ENCODE measurements at regions of chr14 and their contacts with region 1.

Region 1: GRCh38 chr14:55094321-55095157 is 34.5 kb upstream of the LGALS3 start:
- DNase-seq: no peak
- H3K4me3 ChIP-seq: no peak overlapping the region
- H3K27ac ChIP-seq: no peak overlapping the region
- H3K4me1 ChIP-seq: peaks cover 33% of the 10 kb centered on the region
- H3K27me3 ChIP-seq: no peaks in the 10 kb centered on the region
- CTCF ChIP-seq: no peak

Region 2: DNA sequence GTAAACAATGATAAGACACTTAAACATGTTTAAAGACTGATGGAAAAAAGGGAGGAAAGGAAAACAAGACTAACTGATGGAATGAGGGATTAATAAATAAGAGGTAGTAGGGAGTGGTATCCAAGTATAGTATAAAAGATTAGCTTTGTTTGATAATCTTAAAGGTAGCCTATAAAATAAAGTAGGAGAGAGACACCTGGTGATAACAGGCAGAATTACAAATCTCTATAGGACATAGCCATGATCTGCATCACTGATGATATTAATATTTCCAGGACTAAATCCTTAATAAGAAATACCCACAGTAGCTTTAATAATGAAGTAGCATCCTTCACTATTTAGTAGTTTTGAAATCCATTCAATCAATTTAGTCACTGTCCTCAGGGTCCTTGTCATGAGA is 66.5 kb after region 1 on chr14:
- intact Hi-C with region 1: loop called (anchors 1 kb)
- DNase-seq: no peak
- H3K4me3 ChIP-seq: no peak overlapping the region
- H3K27ac ChIP-seq: no peak overlapping the region
- H3K4me1 ChIP-seq: no peaks in the 10 kb centered on the region
- H3K27me3 ChIP-seq: no peaks in the 10 kb centered on the region
- CTCF ChIP-seq: peak; percentile 76

Region 3: GRCh38 chr14:55579724-55580469 is 485.4 kb after region 1 on chr14 and contains the start of gene KTN1:
- intact Hi-C with region 1: no loop called
- DNase-seq: peak; percentile 87
- H3K4me3 ChIP-seq: peak within 1 kb of the TSS; percentile 88
- H3K27ac ChIP-seq: peak within 1 kb of the TSS; percentile 97
- H3K4me1 ChIP-seq: peaks cover 62% of the 10 kb centered on the region
- H3K27me3 ChIP-seq: no peaks in the 10 kb centered on the region
- CTCF ChIP-seq: no peak
- total RNA-seq, gene KTN1: 294 TPM

Measured in left ventricle myocardium inferior (tissue), 1 donor.